ENCODE measurements at regions of chr14 and their contacts with region 1.

Region 1: DNA sequence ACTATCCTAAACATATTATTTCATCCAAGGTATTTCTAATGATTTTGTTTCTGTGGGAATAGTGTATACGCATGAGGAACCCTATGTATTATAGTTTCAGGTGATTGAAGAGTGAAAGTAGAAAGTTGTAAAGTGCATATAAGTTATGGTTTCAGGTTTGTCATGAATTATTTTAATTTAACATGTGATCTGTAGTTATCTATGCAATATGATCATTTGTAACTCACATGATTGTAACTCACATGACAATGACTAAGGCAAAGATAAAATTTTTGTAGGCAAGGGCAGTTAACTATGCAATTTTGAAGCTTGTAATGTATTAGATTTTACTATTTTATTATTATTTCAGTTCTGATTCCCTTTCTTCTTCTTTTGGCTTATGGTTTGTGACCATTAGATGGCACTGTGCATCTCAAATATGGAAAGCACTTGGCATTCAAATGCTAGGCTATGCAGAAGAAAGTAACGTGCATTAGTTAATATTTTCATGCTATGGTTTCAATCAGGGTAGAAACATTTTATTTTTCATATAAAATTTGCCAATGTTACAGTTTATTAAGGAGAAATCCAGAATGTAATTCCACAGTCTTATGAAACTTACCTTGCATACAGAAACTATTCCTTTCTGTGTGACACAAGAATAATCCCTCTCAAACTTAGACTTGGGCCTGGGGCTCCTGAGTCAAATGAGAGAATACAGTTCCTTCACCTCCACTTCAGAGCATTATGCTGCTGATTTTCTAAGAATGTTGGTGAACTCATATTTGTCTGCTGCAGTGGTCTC is 15.8 kb upstream of the TMEM30B start:
- DNase-seq: no peak
- ATAC-seq: peak; percentile 66 to 80 (median 68)
- H3K4me3 ChIP-seq: no peak overlapping the region
- H3K27ac ChIP-seq: no peak overlapping the region
- H3K4me1 ChIP-seq: no peaks in the 10 kb centered on the region
- H3K27me3 ChIP-seq: no peaks in the 10 kb centered on the region
- CTCF ChIP-seq: peak; percentile 50 to 74 (median 72)
- POLR2A ChIP-seq: no peak

Region 2: DNA sequence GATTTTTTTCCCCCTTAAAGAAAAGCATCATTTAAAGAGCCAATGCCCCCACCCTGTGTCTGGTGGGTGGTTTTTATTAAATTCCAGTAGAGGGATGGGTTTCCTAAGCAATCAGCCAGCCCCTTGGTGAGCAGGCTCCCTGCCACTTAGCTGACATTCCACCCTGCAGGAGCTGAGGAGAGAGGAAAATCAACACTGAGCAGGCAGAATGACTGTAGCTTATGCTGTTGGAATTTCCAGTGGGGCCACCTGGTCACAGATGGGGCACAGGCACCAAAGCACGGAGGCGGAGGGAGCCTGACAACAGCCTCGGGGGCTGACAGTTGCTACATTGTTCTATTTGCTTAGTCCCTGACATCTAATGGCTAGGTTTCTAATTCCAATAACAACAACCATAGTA is 143.5 kb before region 1 on chr14:
- intact Hi-C with region 1: no loop called
- DNase-seq: no peak
- ATAC-seq: no peak
- H3K4me3 ChIP-seq: no peak overlapping the region
- H3K27ac ChIP-seq: no peak overlapping the region
- H3K4me1 ChIP-seq: no peaks in the 10 kb centered on the region
- H3K27me3 ChIP-seq: no peaks in the 10 kb centered on the region
- CTCF ChIP-seq: no peak
- POLR2A ChIP-seq: no peak

Region 3: DNA sequence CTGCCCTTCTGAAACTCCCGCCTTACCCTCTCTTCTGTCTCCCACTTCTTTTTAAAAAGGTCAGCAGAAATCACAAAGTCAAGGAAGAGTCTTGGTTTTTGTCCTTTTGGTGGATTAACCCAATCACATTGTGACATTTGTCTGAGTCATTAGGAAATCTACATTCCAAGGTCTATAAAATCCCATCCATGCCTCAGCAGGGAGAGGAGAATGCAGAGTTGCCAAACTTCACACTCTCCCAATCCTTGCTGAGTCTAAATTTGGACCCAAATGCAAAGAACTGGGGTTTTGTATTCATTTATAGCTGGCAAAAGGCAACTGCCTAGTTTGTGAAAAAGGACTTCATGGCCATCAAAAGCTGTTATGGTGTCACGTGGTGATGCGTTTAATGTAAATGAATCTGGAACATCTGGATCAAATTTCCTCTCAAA is 83.7 kb before region 1 on chr14:
- intact Hi-C with region 1: no loop called
- DNase-seq: no peak
- ATAC-seq: no peak
- H3K4me3 ChIP-seq: no peak overlapping the region
- H3K27ac ChIP-seq: no peak overlapping the region
- H3K4me1 ChIP-seq: no peaks in the 10 kb centered on the region
- H3K27me3 ChIP-seq: no peaks in the 10 kb centered on the region
- CTCF ChIP-seq: no peak
- POLR2A ChIP-seq: no peak

Region 4: DNA sequence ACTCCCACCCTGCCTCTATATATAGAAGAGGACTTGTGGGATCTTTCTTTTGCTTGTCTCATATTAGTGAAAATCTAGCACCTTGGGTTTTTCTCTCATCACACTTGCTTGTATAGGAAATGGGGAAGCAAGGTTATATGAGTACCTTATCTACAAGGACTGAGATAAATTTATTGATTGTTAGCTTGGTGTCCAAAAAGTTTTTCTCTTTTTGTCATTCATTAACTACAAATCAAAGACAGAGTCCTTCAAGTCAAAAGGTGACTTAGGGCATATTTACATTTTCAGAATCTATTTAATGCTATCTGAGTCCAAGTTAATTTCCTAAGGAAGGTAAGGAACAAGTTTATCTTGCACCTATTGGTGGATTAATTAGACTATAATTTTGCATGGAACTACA is 558.0 kb after region 1 on chr14:
- intact Hi-C with region 1: loop called in 1 of 2 experiments (anchors 10 kb)
- DNase-seq: no peak
- ATAC-seq: peak in 2 of 4 donors; percentile 50 to 68
- H3K4me3 ChIP-seq: no peak overlapping the region
- H3K27ac ChIP-seq: no peak overlapping the region
- H3K4me1 ChIP-seq: peaks cover 0 to 13% (median 2%) of the 10 kb centered on the region in 4 donors
- H3K27me3 ChIP-seq: no peaks in the 10 kb centered on the region
- CTCF ChIP-seq: no peak
- POLR2A ChIP-seq: no peak